Prostate gland (tissue), 2 donors: ENCODE measurements at regions of chr4 and their contacts with region 1.

Region 1: DNA sequence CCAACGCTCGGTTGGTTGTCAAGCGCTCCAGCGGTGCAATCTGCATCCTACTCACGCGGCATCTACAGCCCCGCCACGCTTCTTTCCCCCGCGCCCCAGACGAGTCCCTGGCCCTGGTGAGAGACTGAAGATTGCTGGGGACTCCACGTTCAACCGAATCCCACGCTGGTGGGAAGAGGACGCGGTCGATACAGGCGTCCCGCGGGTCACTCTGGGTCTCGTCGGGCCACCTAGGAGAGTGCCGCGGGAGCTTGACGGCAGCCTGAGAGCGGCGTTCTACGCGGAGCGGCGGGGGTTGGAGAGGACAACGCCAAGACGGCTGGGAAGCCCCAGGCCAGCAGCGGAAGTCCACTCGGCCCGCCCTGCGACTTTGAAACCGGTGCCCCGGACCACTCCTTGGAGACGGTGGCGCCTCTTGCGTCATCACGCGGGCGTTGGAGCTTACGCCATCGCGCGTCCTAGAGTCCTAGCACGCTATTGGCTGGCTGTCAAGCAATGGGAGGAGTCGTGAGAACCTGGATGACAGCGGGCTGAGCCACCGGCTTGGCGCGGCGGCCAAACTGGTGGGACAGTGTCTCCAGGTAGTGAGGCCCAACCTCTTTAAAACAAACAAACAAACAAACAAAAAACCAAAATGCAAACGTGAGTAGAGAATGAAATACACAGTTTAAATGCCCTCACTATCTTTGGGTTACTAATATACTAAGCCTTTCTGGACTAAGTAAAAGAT is at the start of gene SCLT1:
- DNase-seq: peak; percentile 99
- H3K4me3 ChIP-seq: peak within 1 kb of the TSS; percentile 66 to 67
- H3K27ac ChIP-seq: peak within 1 kb of the TSS; percentile 91 to 95
- H3K4me1 ChIP-seq: no peaks in the 10 kb centered on the region
- H3K27me3 ChIP-seq: no peaks in the 10 kb centered on the region
- CTCF ChIP-seq: no peak
- POLR2A ChIP-seq: peak; percentile 93
- total RNA-seq, gene SCLT1: 6.6 to 7.0 TPM

Region 2: GRCh38 chr4:128287871-128288688 is 805.3 kb before region 1 on chr4:
- intact Hi-C with region 1: loop called (anchors 10 kb)
- DNase-seq: peak; percentile 99
- H3K4me3 ChIP-seq: peak overlapping the region; percentile 84 to 89
- H3K27ac ChIP-seq: peak overlapping the region; percentile 90 to 94
- H3K4me1 ChIP-seq: no peaks in the 10 kb centered on the region
- H3K27me3 ChIP-seq: no peaks in the 10 kb centered on the region
- CTCF ChIP-seq: peak in 3 of 4 experiments; percentile 28 to 67 (median 59)
- POLR2A ChIP-seq: peak; percentile 85

Region 3: GRCh38 chr4:129384974-129385373 is 291.6 kb after region 1 on chr4:
- intact Hi-C with region 1: no loop called
- DNase-seq: no peak
- H3K4me3 ChIP-seq: no peak overlapping the region
- H3K27ac ChIP-seq: no peak overlapping the region
- H3K4me1 ChIP-seq: no peaks in the 10 kb centered on the region
- H3K27me3 ChIP-seq: no peaks in the 10 kb centered on the region
- CTCF ChIP-seq: no peak
- POLR2A ChIP-seq: no peak